ENCODE measurements at regions of chr14 and their contacts with region 1.

Region 1: GRCh38 chr14:74618078-74618952 is 6.3 kb upstream of the LTBP2 start:
- DNase-seq: no peak
- H3K4me3 ChIP-seq: no peak overlapping the region
- H3K27me3 ChIP-seq: no peaks in the 10 kb centered on the region
- CTCF ChIP-seq: no peak

Region 2: DNA sequence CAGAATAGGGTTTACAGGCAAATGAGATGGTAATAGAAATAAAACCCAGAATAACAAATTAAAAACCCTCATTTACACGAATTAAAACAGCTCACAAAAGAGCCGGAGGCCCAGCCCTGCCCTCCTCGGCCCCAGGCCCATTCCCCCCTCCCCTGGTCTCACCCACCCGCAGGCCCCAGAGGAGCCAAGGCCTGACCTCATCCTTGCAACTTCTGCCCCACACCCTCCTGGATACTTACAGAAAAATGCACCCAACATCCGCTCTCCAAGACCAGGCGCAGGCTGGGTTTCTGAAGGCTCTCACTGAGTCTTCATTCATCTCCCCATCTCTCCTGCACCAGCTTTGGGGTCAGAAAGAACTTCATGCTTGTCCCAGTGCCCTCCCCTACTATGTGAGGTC is 395.3 kb before region 1 on chr14:
- CTCF ChIA-PET with region 1: no interaction called
- POLR2A ChIA-PET with region 1: no interaction called
- DNase-seq: no peak
- H3K4me3 ChIP-seq: no peak overlapping the region
- H3K27me3 ChIP-seq: peaks cover 33% of the 10 kb centered on the region
- CTCF ChIP-seq: no peak

Region 3: GRCh38 chr14:74638066-74638465 is 19.8 kb after region 1 on chr14:
- CTCF ChIA-PET with region 1: interaction called, 24 read pairs
- POLR2A ChIA-PET with region 1: interaction called, 10 read pairs
- DNase-seq: no peak
- H3K4me3 ChIP-seq: no peak overlapping the region
- H3K27me3 ChIP-seq: no peaks in the 10 kb centered on the region
- CTCF ChIP-seq: no peak

Region 4: DNA sequence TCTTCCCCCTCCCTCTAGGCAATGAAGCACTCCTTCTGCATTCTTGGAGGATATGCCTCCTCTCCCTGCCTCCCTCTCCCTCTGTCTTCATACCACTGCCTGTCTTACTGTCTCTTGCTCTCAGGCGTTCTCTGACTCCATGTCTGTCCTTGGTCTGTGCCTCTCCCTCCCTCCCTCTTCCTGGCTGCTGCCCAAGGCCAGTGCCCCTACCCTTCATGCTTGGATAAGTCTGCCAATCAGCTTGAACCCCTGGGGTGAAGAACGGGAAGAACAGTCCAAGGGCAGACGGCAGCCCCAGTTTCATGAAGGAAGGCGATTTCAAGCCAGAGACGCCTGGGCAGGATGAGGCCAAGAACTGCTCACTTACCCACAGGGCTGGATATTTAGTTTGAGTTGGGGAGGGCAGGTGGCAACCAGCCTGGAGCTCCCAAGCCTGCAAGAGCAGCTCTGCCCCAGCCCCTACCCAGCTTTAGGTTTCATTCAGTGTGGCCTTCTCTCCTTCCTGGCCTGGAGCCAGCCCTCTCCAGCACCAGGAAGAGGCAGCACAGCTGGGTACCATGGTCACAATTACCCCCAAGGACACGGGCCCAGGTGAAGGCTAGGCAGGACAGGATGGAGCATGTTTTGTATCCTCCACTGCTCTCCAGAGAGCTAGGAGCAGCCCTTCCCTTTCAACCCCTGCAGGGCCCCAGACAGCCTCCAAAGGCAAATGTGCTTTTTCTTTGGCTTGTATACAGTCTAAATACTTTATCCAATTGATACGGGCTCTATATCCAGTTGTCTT is 29.6 kb after region 1 on chr14:
- CTCF ChIA-PET with region 1: interaction called, 11 read pairs
- POLR2A ChIA-PET with region 1: interaction called, 14 read pairs
- DNase-seq: no peak
- H3K4me3 ChIP-seq: no peak overlapping the region
- H3K27me3 ChIP-seq: no peaks in the 10 kb centered on the region
- CTCF ChIP-seq: no peak

Region 5: GRCh38 chr14:74653386-74654138 is 35.2 kb after region 1 on chr14:
- CTCF ChIA-PET with region 1: interaction called, 11 read pairs
- POLR2A ChIA-PET with region 1: interaction called, 14 read pairs
- DNase-seq: peak; percentile 29
- H3K4me3 ChIP-seq: no peak overlapping the region
- H3K27me3 ChIP-seq: no peaks in the 10 kb centered on the region
- CTCF ChIP-seq: no peak

Region 6: DNA sequence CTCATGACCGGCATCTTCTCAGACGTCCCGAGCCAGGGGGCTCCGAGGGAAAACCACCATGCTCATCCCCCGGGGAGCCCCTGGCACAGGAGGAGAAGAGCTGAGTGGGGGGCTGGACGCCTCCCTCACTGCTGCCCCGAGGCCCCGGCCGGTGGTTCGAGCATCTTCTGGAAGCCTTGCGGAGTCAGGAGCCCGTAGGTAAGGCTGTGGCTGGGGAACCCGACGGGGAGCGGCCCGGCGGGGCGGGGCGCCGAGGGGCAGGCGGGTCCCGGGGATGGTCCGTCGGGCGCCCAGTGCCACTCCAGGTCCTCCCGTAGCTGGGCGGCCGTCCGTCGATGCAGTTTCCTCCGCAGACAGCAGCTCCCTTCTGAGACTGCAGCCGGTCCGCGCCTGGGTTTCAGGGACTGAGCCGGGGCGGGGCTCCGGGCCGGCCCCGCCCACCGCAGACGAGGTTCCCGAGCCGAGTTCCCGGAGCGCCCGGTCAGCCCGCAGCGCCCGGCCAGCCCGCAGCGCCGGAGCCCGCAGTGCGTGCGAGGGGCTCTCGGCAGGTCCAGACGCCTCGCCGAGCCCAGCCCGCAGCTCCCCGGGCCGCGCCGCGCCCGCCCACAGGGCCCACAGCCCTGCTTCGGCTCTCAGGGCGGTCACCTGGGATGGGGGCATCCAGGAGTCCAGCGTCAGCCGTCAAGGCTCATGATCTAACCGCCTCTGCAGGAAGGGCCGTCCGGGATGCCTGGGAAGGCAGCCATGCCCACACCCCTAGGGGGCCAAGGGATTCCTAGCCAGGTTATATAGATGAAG is 337.1 kb after region 1 on chr14 and contains the start of gene PGF:
- CTCF ChIA-PET with region 1: no interaction called
- POLR2A ChIA-PET with region 1: no interaction called
- DNase-seq: no peak
- H3K4me3 ChIP-seq: peak within 1 kb of the TSS; percentile 45
- H3K27me3 ChIP-seq: no peaks in the 10 kb centered on the region; the same call in 1 of the 2 replicates
- CTCF ChIP-seq: no peak
- polyA plus RNA-seq, gene PGF: 3.3 and 4.1 TPM in 2 replicates

Measured in BJ (cell line).